Head of caudate nucleus (tissue), 42 donors: ENCODE measurements at regions of chr3 and their contacts with region 1.

Region 1: GRCh38 chr3:115147329-115148141 is 447 bp upstream of the ZBTB20 start:
- DNase-seq: peak; percentile 95 to 100 (median 99)

Region 2: DNA sequence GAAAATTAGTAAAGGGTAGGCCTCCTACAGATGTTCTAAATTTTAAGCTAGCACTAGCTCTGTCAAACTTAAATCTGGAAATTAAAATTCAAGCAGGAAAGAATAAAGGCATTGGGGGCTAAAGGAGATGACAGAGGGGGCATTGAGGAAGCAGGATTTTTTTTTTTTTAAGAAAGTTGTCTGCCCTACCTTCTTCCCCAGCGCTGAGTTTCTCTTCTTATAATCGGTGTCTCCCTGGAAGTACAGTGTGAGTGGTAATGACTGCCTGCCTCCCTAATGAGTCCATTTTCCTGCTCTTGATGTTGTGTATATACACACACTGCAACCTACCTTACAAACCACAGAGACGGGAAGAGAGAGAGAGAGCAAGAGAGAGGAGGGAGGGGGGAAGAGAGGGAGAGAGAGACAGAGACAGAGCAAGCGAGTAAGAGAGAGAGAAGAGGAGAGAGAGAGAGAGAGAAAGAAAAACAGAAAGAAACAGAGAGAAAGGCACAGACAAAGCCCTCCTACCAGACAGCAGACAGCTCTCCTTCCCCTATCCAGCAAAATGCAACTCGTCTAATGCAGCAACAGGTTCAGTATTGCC is 47.5 kb before region 1 on chr3:
- intact Hi-C with region 1: loop called (anchors 5 kb)
- DNase-seq: peak in 17 of 42 donors; percentile 4 to 66 (median 28)

Region 3: GRCh38 chr3:115469649-115470048 is 322.1 kb after region 1 on chr3:
- intact Hi-C with region 1: no loop called
- DNase-seq: no peak